ENCODE measurements at regions of chr2 and their contacts with region 1.

Region 1: DNA sequence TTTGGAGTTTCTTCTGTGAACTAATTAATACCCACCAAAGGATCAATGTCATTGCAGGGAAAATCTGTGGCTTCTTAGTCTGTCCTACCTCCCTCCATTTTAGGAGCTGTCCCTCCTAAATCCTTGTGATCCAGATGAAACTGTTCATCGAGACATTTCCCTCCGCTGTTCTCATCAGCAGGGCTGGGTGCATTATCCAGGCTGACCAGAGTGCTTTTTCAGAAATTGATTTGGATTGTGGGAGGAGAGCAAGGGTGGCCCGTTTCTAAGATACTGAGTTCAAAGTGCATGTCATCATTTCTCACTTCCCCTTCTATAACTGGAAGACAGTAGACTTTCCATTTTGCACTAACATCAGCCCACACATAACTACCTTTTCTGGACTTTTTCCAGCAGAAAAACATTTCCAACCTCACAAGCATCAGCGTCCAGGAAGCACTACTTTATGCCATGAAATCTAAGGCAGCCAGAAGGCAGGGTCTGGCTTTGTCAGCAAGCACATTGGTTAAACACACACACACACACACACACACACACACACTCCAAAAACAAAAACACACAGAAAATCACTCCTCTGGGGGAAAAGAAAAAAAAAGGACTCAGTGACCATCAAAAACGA is 94.1 kb downstream of the ANKRD44 start:
- DNase-seq: peak; percentile 76
- H3K4me3 ChIP-seq: peak overlapping the region; percentile 45
- H3K27ac ChIP-seq: peak overlapping the region; percentile 96
- H3K4me1 ChIP-seq: peaks cover 71% of the 10 kb centered on the region
- CTCF ChIP-seq: no peak

Region 2: DNA sequence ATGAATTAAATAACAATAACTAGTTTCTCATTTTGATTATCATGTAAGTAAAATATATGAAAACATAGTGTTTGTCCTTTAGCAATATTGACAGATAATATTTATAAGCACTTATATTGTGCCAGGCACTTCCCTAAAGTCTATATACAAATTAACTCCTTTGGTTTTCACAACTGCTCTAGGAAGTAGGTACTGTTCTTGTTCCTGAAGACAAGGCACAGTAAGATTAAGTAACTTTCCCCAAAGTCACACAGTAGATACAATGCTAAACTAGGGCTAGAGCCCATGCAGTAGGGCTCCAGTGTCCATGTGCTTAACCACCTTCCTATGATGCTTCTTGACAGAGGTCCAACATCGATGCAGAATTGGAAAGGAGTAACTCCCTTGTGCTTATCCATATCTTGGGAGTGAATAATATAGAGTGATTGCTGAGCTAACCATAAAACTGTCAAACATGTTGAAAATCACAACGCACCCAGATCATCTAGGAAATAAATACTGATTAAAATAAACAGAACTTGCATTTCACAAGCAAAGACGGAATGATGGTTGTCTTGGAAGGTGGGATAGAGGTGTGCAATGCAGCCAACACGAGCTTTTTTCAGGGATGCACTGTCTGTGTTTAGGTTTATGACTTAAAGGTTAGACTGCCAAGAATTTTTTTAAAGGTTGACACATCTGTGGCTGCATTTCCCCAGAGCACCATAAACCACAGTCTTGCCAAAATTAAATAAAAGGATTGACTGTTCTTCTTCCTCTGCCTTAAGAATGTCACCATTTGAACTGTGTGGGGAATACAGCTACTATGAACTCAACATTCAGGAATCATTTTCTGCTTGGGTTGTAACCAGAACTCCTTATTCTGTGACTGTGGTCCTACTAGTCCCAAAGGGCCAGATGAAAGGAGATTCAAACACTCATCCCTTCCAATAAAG is 13.3 kb after region 1 on chr2:
- CTCF ChIA-PET with region 1: no interaction called
- POLR2A ChIA-PET with region 1: interaction called, 11 read pairs
- intact Hi-C with region 1: loop called (anchors 2 kb)
- DNase-seq: no peak
- H3K4me3 ChIP-seq: no peak overlapping the region
- H3K27ac ChIP-seq: no peak overlapping the region
- H3K4me1 ChIP-seq: no peaks in the 10 kb centered on the region
- CTCF ChIP-seq: no peak

Region 3: GRCh38 chr2:197239434-197239833 is 23.0 kb after region 1 on chr2:
- CTCF ChIA-PET with region 1: interaction called, 3 read pairs
- POLR2A ChIA-PET with region 1: interaction called, 7 read pairs
- intact Hi-C with region 1: loop called (anchors 2 kb)
- DNase-seq: no peak
- H3K4me3 ChIP-seq: peak overlapping the region; percentile 47
- H3K27ac ChIP-seq: no peak overlapping the region
- H3K4me1 ChIP-seq: peaks cover 57% of the 10 kb centered on the region
- CTCF ChIP-seq: no peak